ENCODE measurements at regions of chr2 and their contacts with region 1.

Region 1: DNA sequence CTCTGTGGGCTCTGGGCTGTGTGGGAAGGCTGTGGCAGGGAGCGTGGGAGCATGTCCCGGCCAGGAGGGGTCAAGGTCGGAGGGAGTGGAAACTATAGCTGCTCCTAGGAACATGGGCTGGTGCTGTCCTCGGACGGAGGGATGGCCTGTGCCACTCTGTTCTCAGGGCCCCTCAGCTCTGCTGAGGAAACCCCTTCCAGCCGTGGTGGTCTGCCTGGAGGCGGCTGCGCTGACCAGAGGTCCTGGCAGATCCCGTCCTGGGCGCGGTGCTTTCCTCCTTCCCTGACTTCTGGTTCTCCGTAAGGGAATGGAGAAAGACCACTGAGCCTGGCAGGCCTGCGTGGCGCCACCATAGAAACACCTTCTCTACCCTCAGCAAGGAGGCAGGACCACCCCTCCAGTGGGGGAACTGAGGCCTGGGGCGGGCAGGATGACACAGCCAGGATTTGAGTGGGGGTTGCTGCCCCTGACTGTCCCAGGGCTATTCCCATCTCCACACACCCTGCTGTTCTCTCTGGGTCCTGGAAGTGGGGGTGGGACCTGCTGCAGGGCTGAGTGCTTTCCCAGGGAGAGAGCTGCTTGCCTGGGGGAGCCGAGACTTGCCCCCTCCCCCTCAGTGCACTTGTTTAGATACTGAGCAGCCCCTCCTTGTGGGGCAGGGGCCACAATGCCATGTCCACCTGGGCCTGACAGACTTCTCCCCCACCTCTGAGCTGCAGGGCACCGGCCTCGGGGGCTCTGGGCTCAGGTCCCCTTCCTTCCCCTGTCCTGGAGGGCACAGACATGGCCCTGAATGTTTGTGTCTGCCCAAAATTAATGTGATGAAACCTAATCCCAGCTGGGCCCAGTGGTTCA is 301.0 kb upstream of the HS6ST1 start:
- DNase-seq: no peak
- ATAC-seq: no peak
- H3K4me3 ChIP-seq: no peak overlapping the region
- H3K27ac ChIP-seq: no peak overlapping the region
- H3K4me1 ChIP-seq: no peaks in the 10 kb centered on the region
- H3K27me3 ChIP-seq: no peaks in the 10 kb centered on the region
- CTCF ChIP-seq: no peak

Region 2: GRCh38 chr2:127853671-127854070 is 766.0 kb before region 1 on chr2:
- CTCF ChIA-PET with region 1: no interaction called
- POLR2A ChIA-PET with region 1: interaction called, 10 read pairs
- in situ Hi-C with region 1: no loop called
- intact Hi-C with region 1: no loop called
- DNase-seq: no peak
- ATAC-seq: no peak
- H3K4me3 ChIP-seq: no peak overlapping the region
- H3K27ac ChIP-seq: no peak overlapping the region
- H3K4me1 ChIP-seq: peaks cover 9% of the 10 kb centered on the region
- H3K27me3 ChIP-seq: no peaks in the 10 kb centered on the region
- CTCF ChIP-seq: no peak

Region 3: GRCh38 chr2:128686497-128686859 is 66.8 kb after region 1 on chr2:
- CTCF ChIA-PET with region 1: no interaction called
- POLR2A ChIA-PET with region 1: no interaction called
- in situ Hi-C with region 1: no loop called
- intact Hi-C with region 1: no loop called
- DNase-seq: no peak
- ATAC-seq: no peak
- H3K4me3 ChIP-seq: no peak overlapping the region
- H3K27ac ChIP-seq: no peak overlapping the region
- H3K4me1 ChIP-seq: no peaks in the 10 kb centered on the region
- H3K27me3 ChIP-seq: no peaks in the 10 kb centered on the region; the same call in 1 of the 2 replicates
- CTCF ChIP-seq: no peak